Lower leg skin (tissue), 4 donors: ENCODE measurements at regions of chr3 and their contacts with region 1.

Region 1: GRCh38 chr3:79436387-79436786 is 331.4 kb downstream of the ROBO1 start:
- DNase-seq: no peak
- H3K4me3 ChIP-seq: no peak overlapping the region
- CTCF ChIP-seq: no peak
- POLR2A ChIP-seq: no peak

Region 2: GRCh38 chr3:78569804-78570203 is 866.6 kb before region 1 on chr3:
- intact Hi-C with region 1: loop called (anchors 5 kb)
- DNase-seq: no peak
- H3K4me3 ChIP-seq: no peak overlapping the region
- CTCF ChIP-seq: no peak
- POLR2A ChIP-seq: no peak

Region 3: GRCh38 chr3:79339846-79340245 is 96.5 kb before region 1 on chr3:
- intact Hi-C with region 1: no loop called
- DNase-seq: peak in 1 of 2 donors; percentile 44
- H3K4me3 ChIP-seq: no peak overlapping the region
- CTCF ChIP-seq: no peak
- POLR2A ChIP-seq: no peak

Region 4: DNA sequence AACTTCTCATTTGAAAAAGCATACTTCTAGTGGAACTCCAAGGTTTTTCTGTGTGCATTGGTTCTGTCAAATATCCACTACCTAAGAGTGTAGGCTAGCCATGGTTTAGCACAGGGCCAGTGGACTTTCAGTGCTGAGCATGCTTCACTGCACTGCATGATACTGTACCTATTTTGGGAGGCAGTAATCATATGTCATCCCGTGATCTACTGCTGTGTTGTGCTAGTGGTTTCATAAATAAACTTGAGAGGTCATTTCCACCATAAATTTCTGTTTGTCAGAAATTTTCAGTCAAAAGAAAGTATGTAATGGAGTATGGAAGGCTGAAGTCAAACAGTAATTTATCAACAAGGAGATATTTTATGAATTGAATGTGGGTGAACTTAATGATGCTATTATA is 127.8 kb after region 1 on chr3:
- intact Hi-C with region 1: no loop called
- DNase-seq: no peak
- H3K4me3 ChIP-seq: no peak overlapping the region
- CTCF ChIP-seq: no peak
- POLR2A ChIP-seq: no peak